RWPE1 (cell line): ENCODE measurements at regions of chr5 and their contacts with region 1.

Region 1: DNA sequence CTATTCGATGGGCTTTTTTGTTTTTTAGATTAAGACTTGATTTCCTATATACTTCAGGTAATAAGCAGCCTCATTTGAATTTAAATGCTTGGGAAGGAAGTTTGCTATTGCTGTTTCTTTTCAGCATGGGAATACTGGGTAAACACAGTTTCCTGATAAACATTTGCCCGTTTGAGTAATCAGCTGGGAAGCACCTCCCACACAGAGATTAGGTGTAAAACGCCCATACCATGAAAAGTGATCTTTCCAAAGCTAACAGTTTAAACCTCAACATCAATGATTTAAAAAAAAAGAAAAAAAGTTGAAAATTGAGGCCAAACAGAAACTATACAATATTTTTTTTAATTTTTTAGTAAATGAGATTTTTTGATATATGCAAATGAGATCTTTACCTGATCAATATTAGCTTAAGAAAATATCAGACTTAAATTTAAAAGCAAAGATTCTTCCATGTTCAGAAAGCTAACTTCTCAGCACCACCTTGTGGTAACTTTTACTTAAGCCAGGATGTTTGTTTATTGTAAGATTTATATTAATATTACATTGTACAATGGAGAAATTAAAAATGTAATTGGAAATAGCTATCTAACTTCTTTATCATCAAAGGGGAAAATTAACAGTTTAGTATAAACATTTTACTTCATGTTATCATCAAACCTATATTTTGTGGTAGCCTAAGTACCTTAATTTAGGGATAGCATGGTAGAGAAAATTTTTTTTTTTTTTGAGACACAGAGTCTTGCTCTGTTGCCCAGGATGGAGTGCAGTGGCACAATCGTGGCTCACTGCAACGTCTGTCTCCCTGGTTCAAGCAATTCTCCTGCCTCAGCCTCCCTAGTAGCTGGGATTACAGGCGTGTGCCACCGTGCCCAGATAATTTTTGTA is 39.8 kb downstream of the F2RL2 start:
- DNase-seq: peak; percentile 23
- H3K27ac ChIP-seq: no peak overlapping the region
- CTCF ChIP-seq: peak; percentile 75

Region 2: GRCh38 chr5:76303921-76304320 is 279.5 kb before region 1 on chr5:
- CTCF ChIA-PET with region 1: interaction called, 10 read pairs
- POLR2A ChIA-PET with region 1: no interaction called
- DNase-seq: peak; percentile 36
- H3K27ac ChIP-seq: no peak overlapping the region
- CTCF ChIP-seq: no peak